Activated CD4-positive, alpha-beta memory T cell treated with anti-CD3 and anti-CD28 coated beads for 36 hours (primary cell): ENCODE measurements at regions of chr11 and their contacts with region 1.

Region 1: DNA sequence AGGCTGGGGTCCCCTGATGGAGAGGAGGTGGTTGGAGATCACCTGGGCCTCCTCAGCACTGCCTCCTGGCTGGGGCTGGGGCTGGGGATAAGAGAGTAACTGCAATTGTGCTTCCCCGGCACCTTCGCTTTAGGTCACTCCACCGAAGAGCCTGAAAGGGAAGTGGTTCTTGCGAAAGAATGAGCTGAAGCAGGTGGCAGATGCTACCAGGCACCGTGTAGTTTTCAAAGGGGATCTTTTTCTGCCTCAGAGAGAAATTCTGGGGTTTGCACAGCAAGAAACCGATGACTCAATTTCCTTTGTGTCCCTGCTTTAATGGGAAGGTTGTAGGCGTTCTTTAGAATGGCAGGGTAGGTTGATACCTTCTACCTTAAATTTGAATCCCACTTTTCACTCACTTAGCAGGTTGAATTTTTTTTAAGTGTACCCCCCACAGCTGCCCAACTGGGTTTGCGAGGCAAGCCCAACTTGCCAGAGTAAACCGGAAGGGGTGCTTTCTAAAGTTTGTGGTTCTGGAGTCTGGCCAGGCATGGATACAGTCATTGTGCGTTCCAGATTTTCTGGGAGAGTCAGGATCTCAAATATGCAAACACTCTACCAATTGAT is 5.3 kb downstream of the CD44 start:
- DNase-seq: peak; percentile 85
- H3K4me3 Mint-ChIP-seq: peak overlapping the region; percentile 66
- H3K27ac Mint-ChIP-seq: peak overlapping the region; percentile 99
- H3K4me1 Mint-ChIP-seq: peaks cover 69% of the 10 kb centered on the region
- H3K27me3 Mint-ChIP-seq: no peaks in the 10 kb centered on the region

Region 2: GRCh38 chr11:34926101-34926830 is 218.0 kb before region 1 on chr11:
- CTCF ChIA-PET with region 1: interaction called, 7 read pairs
- POLR2A ChIA-PET with region 1: no interaction called
- intact Hi-C with region 1: loop called (anchors 1 kb)
- DNase-seq: no peak
- H3K4me3 Mint-ChIP-seq: no peak overlapping the region
- H3K27ac Mint-ChIP-seq: no peak overlapping the region
- H3K4me1 Mint-ChIP-seq: peaks cover 16% of the 10 kb centered on the region
- H3K27me3 Mint-ChIP-seq: no peaks in the 10 kb centered on the region

Region 3: DNA sequence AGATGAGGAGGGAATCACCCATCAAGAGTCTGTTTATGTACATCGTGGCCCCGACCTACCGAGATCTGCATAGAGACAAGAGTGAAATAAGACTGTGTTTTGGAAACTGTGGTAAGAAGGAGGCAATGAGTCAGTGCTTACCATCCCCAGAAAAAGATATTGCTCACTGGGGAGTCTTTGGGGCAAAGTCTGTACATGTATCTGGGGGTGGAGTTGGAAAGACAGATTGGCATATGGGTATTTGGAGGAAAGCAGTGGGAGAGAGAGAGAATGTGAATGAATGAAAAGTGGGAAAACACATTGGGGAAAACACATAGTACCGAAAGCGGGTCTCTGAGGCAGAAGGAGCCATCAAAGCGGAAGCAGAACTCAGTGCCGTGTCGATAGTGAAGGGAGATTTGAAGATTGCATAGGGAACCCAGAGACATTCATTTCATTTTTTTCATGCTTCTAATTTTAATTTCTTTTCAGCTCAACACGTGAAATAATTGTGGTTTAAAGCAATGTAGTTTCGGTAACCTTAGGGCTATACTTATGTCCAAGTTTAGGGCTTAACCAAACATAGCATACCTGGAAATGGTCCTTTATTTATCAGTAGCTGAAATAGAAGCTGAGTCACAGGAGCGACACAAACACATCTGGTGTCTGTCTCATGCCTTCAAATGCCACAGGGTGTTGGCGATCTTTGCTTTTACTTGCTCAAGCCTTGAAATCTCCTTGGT is 103.9 kb before region 1 on chr11:
- CTCF ChIA-PET with region 1: interaction called, 6 read pairs
- POLR2A ChIA-PET with region 1: interaction called, 10 read pairs
- intact Hi-C with region 1: loop called (anchors 1 kb)
- DNase-seq: peak; percentile 79
- H3K4me3 Mint-ChIP-seq: peak overlapping the region; percentile 79
- H3K27ac Mint-ChIP-seq: peak overlapping the region; percentile 94
- H3K4me1 Mint-ChIP-seq: peaks cover 74% of the 10 kb centered on the region
- H3K27me3 Mint-ChIP-seq: peaks cover 1% of the 10 kb centered on the region

Region 4: DNA sequence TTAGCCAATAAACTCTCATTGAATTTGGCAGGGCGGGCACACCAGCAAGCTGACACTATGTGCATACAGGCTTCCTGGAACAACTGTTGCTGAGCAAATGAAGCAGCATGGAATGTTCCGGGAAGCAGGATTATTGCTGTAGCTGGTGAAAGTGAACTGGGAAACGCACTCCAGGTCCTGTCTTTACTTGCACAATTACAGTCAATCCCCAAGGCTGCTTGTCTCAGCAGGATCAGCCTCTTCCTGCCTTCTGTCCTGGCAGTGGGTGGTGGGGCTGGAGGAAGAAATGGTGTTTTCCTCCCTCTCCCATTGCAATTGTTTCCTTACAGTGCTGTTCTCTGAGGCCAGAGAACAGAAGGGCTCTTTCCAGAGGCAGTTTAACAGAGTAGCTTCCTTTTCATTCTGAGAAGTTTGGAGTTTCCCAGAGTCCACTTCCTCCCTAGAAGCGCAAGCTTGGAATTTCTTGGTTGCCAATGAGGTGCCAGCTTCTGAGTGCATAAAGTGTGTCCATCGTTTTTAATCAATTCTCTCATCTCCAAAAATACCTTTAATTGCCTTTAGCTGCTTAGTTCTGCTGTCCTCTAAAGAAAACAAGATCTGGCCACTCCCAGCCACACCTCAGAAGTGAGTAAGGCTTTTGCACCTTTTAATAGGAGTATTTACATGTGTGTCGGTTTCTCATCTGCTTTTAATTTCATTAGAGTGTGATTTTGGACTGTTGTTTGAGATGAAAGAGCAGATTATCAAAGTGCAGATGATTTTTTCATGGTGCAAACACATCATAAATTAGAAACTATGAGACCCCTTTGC is 14.7 kb after region 1 on chr11:
- CTCF ChIA-PET with region 1: interaction called, 113 read pairs
- POLR2A ChIA-PET with region 1: interaction called, 24 read pairs
- intact Hi-C with region 1: no loop called
- DNase-seq: no peak
- H3K4me3 Mint-ChIP-seq: peak overlapping the region; percentile 21
- H3K27ac Mint-ChIP-seq: peak overlapping the region; percentile 83
- H3K4me1 Mint-ChIP-seq: peaks cover 99% of the 10 kb centered on the region
- H3K27me3 Mint-ChIP-seq: no peaks in the 10 kb centered on the region

Region 5: GRCh38 chr11:35182317-35182939 is 38.2 kb after region 1 on chr11:
- CTCF ChIA-PET with region 1: interaction called, 16 read pairs
- POLR2A ChIA-PET with region 1: interaction called, 27 read pairs
- intact Hi-C with region 1: loop called (anchors 1 kb)
- DNase-seq: no peak
- H3K4me3 Mint-ChIP-seq: no peak overlapping the region
- H3K27ac Mint-ChIP-seq: peak overlapping the region; percentile 76
- H3K4me1 Mint-ChIP-seq: peaks cover 82% of the 10 kb centered on the region
- H3K27me3 Mint-ChIP-seq: no peaks in the 10 kb centered on the region

Region 6: DNA sequence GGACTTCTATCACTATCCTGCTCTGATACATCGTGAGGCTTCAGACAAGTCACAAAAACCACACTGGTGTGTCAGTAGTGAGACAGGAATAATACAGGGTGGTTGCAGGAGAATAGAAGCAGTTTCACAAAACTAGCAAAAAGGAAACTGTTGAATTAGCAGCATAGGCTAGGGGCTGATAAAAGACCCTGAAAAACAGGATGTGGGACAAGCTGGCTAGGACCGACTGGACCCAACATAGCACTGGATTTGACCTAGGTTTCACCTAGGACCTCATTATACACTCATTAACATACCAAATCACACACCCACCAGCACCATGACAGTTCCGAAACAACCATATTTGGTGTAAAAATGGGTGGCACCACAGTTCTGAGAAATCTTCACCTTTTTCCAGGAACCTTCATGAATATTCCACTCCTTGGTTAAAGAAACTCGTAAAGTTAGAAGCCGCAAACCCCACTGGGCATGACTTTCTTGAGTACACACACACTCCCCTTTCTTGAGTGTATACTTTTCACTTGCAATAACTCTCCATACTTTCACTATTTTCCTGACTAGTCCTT is 198.9 kb after region 1 on chr11:
- CTCF ChIA-PET with region 1: no interaction called
- POLR2A ChIA-PET with region 1: interaction called, 3 read pairs
- intact Hi-C with region 1: loop called (anchors 5 kb)
- DNase-seq: peak; percentile 58
- H3K4me3 Mint-ChIP-seq: peak overlapping the region; percentile 42
- H3K27ac Mint-ChIP-seq: peak overlapping the region; percentile 66
- H3K4me1 Mint-ChIP-seq: peaks cover 42% of the 10 kb centered on the region
- H3K27me3 Mint-ChIP-seq: peaks cover 2% of the 10 kb centered on the region